ENCODE measurements at regions of chr10 and their contacts with region 1.

Region 1: DNA sequence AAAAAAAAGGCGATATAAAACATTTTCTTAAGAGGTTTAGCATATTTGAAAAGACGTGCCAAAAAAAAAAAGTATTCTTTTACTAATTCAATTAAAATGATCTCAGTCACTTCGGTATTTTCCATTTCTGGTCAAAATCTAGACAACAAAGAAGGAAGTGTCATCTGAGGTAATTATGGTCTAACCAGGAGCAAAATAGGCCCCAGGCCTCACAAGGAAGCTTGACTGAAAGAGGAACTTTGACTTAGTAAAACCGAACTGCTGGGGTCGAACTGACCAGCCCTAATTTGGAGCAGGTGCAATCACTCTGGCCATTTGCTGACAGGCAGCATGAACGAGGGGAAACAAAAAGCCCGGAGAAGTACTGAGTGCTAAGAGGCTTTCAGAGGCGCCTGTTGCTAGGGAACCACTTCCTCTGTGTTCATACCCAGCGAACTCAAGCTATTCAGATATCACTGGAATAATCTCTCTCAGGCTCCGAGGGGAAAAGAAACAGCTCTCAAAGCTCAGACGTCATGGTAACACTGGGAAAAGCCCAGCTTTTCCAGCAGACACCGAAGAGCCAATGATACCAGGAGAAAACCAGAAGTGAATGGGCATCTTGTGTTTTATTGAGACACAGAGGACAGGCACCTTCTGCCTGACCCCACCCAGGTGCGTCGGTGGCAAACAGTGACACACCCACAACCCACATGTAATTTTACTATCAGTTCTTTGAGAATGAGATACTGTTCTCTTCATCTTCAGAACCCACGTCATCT is 126.5 kb downstream of the FAM107B start:
- DNase-seq: peak; percentile 55 to 93 (median 86)
- ATAC-seq: peak; percentile 91
- H3K4me3 ChIP-seq: peak overlapping the region; percentile 54
- H3K4me3 Mint-ChIP-seq: peak overlapping the region; percentile 77 to 98 (median 88)
- H3K27ac ChIP-seq: peak overlapping the region; percentile 98
- H3K27ac Mint-ChIP-seq: peak overlapping the region; percentile 95 to 100 (median 99)
- H3K4me1 ChIP-seq: peaks cover 25 to 31% of the 10 kb centered on the region in 2 donors
- H3K4me1 Mint-ChIP-seq: peaks cover 20 to 70% (median 61%) of the 10 kb centered on the region in 7 donors
- H3K27me3 ChIP-seq: no peaks in the 10 kb centered on the region
- H3K27me3 Mint-ChIP-seq: no peaks in the 10 kb centered on the region

Region 2: DNA sequence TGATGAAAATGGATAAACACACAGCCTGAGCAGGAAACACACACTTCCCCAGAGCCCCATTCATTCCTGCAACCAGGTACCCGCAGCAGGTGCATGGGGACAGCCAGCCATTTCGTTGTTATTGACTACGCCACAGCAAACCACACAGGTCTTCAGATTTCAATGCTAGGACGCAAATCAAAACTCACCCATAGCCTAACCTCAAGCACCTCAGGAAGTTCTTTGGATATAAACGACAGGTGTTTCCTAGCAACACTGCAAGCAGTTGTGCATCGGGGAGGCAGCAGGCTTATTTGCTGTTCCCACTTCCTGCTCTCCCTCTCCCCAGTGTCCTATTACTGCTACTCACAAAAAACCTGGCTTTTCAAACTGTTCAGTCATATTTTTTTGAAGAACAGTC is 141.0 kb before region 1 on chr10:
- CTCF ChIA-PET with region 1: no interaction called
- POLR2A ChIA-PET with region 1: no interaction called
- intact Hi-C with region 1: loop called in 1 of 2 experiments (anchors 2 kb)
- DNase-seq: peak in 8 of 9 donors; percentile 21 to 89 (median 82)
- ATAC-seq: peak; percentile 96
- H3K4me3 ChIP-seq: no peak overlapping the region
- H3K4me3 Mint-ChIP-seq: peak overlapping the region; percentile 5 to 80 (median 62)
- H3K27ac ChIP-seq: peak overlapping the region; percentile 72
- H3K27ac Mint-ChIP-seq: peak overlapping the region; percentile 68 to 100 (median 92)
- H3K4me1 ChIP-seq: peaks cover 21 to 25% of the 10 kb centered on the region in 2 donors
- H3K4me1 Mint-ChIP-seq: peaks cover 17 to 41% (median 32%) of the 10 kb centered on the region in 7 donors
- H3K27me3 ChIP-seq: no peaks in the 10 kb centered on the region
- H3K27me3 Mint-ChIP-seq: no peaks in the 10 kb centered on the region

Region 3: DNA sequence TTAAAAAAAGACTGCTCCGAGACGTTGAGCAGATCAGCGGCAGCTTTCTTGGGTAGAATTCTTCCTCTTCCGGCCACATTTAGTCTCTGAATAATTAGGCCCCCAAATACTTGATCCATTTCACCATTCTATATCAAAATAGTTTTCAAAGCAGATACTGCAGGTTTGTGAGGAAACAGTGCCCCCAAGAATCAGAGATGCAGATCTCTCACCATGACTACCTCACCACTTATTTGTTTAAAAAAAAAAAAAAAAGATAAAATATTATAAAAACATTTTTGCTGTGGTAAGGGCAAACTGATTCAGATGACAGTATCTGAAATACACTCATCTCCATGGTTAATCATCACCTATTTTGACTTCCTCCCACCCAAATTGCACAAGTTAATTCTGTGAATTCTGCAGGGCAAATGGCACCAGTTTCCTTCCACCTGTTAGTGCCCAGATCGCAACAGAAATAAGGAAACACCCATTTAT is 83.9 kb before region 1 on chr10:
- CTCF ChIA-PET with region 1: no interaction called
- POLR2A ChIA-PET with region 1: interaction called, 5 read pairs
- intact Hi-C with region 1: loop called in 1 of 2 experiments (anchors 1 kb)
- DNase-seq: peak in 6 of 9 donors; percentile 42 to 62 (median 58)
- ATAC-seq: peak; percentile 64
- H3K4me3 ChIP-seq: peak overlapping the region; percentile 51
- H3K4me3 Mint-ChIP-seq: peak overlapping the region; percentile 76 to 93 (median 86)
- H3K27ac ChIP-seq: peak overlapping the region; percentile 82
- H3K27ac Mint-ChIP-seq: peak overlapping the region; percentile 92 to 99 (median 96)
- H3K4me1 ChIP-seq: peaks cover 78 to 80% of the 10 kb centered on the region in 2 donors
- H3K4me1 Mint-ChIP-seq: peaks cover 84 to 100% (median 92%) of the 10 kb centered on the region in 7 donors
- H3K27me3 ChIP-seq: no peaks in the 10 kb centered on the region
- H3K27me3 Mint-ChIP-seq: no peaks in the 10 kb centered on the region

Region 4: DNA sequence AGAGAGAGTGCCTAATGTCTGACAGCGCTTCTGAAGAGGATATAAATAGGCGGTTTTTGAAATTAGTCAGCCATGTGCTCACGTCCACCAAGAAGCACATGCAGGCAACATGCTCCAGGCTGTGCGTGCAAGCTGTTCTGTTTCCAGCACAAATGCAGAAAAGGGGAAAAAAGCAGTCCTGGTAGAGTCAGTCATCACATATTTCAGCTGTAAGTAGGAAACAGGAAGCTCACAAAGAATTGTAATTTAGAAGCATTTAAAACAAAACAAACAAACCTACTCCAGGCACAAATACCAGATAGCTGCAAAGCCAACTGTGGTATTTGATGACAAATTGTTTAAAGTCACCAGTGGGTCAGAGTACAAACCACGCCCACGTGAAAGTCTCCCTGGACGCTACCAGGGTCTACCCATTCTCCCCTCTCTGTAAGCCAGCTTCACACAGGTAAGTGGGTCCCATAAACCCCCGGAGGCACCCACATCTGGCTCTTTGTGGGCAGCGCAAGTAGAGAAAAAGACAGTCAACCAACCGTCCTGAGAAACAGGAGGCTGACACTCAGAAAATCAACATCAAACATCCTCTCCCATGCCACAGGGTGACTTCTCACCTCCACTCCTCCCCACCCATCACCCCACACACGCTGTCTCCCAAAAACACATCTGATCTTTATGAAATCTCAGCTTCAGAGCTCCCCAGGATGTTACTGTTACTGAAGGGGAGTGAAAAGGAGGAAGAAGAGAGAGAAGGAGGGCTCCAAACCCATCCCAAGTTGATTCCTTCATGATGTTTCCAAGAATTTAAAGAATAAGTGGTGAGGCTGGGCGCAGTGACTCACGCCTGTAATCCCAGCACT is 59.9 kb before region 1 on chr10:
- CTCF ChIA-PET with region 1: no interaction called
- POLR2A ChIA-PET with region 1: interaction called, 3 read pairs
- intact Hi-C with region 1: loop called in 1 of 2 experiments (anchors 1 kb)
- DNase-seq: peak in 6 of 9 donors; percentile 24 to 60 (median 44)
- ATAC-seq: peak; percentile 20
- H3K4me3 ChIP-seq: peak overlapping the region; percentile 31
- H3K4me3 Mint-ChIP-seq: peak overlapping the region; percentile 76 to 88 (median 84)
- H3K27ac ChIP-seq: peak overlapping the region; percentile 83
- H3K27ac Mint-ChIP-seq: peak overlapping the region; percentile 96 to 100 (median 99)
- H3K4me1 ChIP-seq: peaks cover 73 to 76% of the 10 kb centered on the region in 2 donors
- H3K4me1 Mint-ChIP-seq: peaks cover 52 to 94% (median 93%) of the 10 kb centered on the region in 7 donors
- H3K27me3 ChIP-seq: no peaks in the 10 kb centered on the region
- H3K27me3 Mint-ChIP-seq: no peaks in the 10 kb centered on the region

Region 5: GRCh38 chr10:14723052-14723689 is 75.0 kb after region 1 on chr10:
- CTCF ChIA-PET with region 1: no interaction called
- POLR2A ChIA-PET with region 1: no interaction called
- intact Hi-C with region 1: loop called in 1 of 2 experiments (anchors 2 kb)
- DNase-seq: peak in 8 of 9 donors; percentile 24 to 64 (median 52)
- ATAC-seq: peak; percentile 90
- H3K4me3 ChIP-seq: peak overlapping the region; percentile 36
- H3K4me3 Mint-ChIP-seq: peak overlapping the region; percentile 9 to 71 (median 58)
- H3K27ac ChIP-seq: peak overlapping the region; percentile 53
- H3K27ac Mint-ChIP-seq: peak overlapping the region; percentile 47 to 97 (median 92)
- H3K4me1 ChIP-seq: peaks cover 17 to 33% of the 10 kb centered on the region in 2 donors
- H3K4me1 Mint-ChIP-seq: peaks cover 31 to 43% (median 37%) of the 10 kb centered on the region in 7 donors
- H3K27me3 ChIP-seq: no peaks in the 10 kb centered on the region
- H3K27me3 Mint-ChIP-seq: no peaks in the 10 kb centered on the region

Region 6: DNA sequence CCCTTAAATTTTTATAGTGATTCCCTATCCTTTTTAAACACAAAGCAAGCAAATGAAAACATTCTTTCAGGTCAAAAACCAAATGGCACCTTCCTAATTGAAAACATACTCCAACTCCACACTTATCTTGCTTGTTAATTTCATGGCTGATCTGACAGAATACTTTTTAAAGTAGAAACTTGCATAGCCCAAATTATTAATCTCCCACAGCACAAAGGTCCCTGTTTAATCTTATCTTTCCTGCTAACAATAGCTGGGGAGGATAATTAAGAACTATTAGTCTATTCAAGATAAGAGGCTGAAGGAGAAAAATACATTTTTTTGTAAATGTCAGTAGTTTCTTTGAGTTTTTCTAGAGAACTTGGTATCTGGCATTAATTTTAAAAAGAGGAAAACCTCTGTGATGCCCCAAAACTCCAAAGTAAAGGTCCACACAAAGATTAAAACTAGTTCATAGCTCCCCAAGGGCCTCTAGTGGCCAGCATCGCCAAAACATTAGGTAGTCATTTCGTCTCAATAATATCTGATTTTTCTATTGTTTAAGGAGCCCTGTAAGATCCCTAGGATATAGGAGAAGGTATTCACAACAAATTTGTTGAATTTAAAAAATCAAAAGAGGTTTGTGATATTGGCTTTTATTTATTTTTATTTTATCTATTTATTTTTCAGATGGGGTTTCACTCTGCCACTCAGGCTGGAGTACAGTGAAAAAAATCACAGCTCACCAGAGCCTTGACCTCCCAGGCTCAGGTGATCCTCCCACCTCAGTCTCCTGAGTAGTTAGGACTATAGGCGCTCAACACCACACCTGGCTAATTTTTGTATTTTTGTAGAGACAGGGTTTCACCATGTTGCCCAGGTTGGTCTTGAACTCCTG is 174.9 kb after region 1 on chr10:
- CTCF ChIA-PET with region 1: interaction called, 3 read pairs
- POLR2A ChIA-PET with region 1: no interaction called
- intact Hi-C with region 1: loop called in 1 of 2 experiments (anchors 5 kb)
- DNase-seq: peak in 6 of 9 donors; percentile 14 to 54 (median 38)
- ATAC-seq: peak; percentile 64
- H3K4me3 ChIP-seq: no peak overlapping the region
- H3K4me3 Mint-ChIP-seq: no peak overlapping the region
- H3K27ac ChIP-seq: no peak overlapping the region
- H3K27ac Mint-ChIP-seq: peak overlapping the region in 4 of 9 donors; percentile 5 to 14 (median 10)
- H3K4me1 ChIP-seq: no peaks in the 10 kb centered on the region
- H3K4me1 Mint-ChIP-seq: peaks cover 0 to 15% (median 3%) of the 10 kb centered on the region in 7 donors
- H3K27me3 ChIP-seq: no peaks in the 10 kb centered on the region
- H3K27me3 Mint-ChIP-seq: peaks cover 0 to 10% (median 0%) of the 10 kb centered on the region in 5 donors

Region 7: GRCh38 chr10:14959276-14960057 is 311.3 kb after region 1 on chr10 and contains the start of gene MEIG1:
- CTCF ChIA-PET with region 1: no interaction called
- POLR2A ChIA-PET with region 1: interaction called, 3 read pairs
- intact Hi-C with region 1: loop called (anchors 1 to 5 kb)
- DNase-seq: peak; percentile 82 to 99 (median 90)
- ATAC-seq: peak; percentile 93
- H3K4me3 ChIP-seq: peak within 1 kb of the TSS; percentile 97
- H3K4me3 Mint-ChIP-seq: peak within 1 kb of the TSS; percentile 91 to 99 (median 96)
- H3K27ac ChIP-seq: peak within 1 kb of the TSS; percentile 81
- H3K27ac Mint-ChIP-seq: peak within 1 kb of the TSS; percentile 93 to 98 (median 96)
- H3K4me1 ChIP-seq: peaks cover 8 to 10% of the 10 kb centered on the region in 2 donors
- H3K4me1 Mint-ChIP-seq: peaks cover 6 to 42% (median 34%) of the 10 kb centered on the region in 7 donors
- H3K27me3 ChIP-seq: no peaks in the 10 kb centered on the region
- H3K27me3 Mint-ChIP-seq: no peaks in the 10 kb centered on the region
- total RNA-seq, gene MEIG1: 1.2 to 1.9 TPM in 2 of 5 experiments, not detected in the others

Region 8: GRCh38 chr10:15059914-15060313 is 411.7 kb after region 1 on chr10:
- CTCF ChIA-PET with region 1: no interaction called
- POLR2A ChIA-PET with region 1: no interaction called
- intact Hi-C with region 1: no loop called
- DNase-seq: no peak
- ATAC-seq: no peak
- H3K4me3 ChIP-seq: no peak overlapping the region
- H3K4me3 Mint-ChIP-seq: no peak overlapping the region
- H3K27ac ChIP-seq: no peak overlapping the region
- H3K27ac Mint-ChIP-seq: no peak overlapping the region
- H3K4me1 ChIP-seq: no peaks in the 10 kb centered on the region
- H3K4me1 Mint-ChIP-seq: no peaks in the 10 kb centered on the region
- H3K27me3 ChIP-seq: no peaks in the 10 kb centered on the region
- H3K27me3 Mint-ChIP-seq: peaks cover 4 to 16% (median 8%) of the 10 kb centered on the region in 5 donors

Measured in naive thymus-derived CD4-positive, alpha-beta T cell (primary cell).